GM10248 (cell line): ENCODE measurements at regions of chr13 and their contacts with region 1.

Region 1: DNA sequence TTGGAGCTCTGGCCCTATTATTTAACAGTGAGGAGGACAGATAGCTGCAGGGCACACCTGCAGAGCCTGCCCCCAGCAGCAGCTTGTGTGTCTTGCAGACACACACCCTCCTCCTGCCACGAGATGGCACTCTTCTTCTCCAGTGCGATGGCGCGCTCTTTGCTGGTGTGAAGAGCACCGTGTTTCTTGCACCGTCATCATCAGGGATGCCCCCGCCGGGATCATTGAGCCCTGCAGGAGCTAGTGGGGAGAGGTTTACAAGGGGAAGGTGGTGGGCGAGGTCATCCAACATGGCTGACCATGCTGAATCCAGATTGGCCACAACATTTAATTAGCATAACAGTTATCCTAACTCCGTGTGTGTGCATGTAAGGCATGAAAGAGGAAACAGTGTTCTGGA is 105.6 kb downstream of the RAB20 start:
- DNase-seq: peak; percentile 90
- CTCF ChIP-seq: peak; percentile 97

Region 2: DNA sequence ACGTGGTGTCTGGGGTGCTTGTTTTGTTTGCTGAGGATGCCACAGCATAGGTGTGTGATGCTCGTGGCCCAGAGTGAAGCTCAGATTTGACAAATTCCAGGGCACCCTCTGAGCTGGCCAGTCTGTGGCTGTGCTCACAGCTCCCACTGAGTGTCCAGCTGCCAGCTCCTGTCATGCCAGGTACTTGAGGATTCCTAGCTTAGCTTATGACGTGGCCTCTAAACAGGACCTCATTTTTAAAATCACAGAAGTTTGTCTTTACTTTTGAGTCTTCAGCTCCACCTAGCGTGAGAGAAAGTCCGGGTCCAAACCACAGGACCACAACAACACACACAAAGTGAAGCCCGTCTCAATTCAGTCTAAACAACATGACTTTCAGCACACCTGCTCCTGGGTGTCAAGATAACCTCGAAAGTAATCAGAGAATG is 11.7 kb before region 1 on chr13:
- CTCF ChIA-PET with region 1: interaction called, 39 read pairs
- POLR2A ChIA-PET with region 1: no interaction called
- DNase-seq: peak; percentile 47
- CTCF ChIP-seq: no peak

Region 3: DNA sequence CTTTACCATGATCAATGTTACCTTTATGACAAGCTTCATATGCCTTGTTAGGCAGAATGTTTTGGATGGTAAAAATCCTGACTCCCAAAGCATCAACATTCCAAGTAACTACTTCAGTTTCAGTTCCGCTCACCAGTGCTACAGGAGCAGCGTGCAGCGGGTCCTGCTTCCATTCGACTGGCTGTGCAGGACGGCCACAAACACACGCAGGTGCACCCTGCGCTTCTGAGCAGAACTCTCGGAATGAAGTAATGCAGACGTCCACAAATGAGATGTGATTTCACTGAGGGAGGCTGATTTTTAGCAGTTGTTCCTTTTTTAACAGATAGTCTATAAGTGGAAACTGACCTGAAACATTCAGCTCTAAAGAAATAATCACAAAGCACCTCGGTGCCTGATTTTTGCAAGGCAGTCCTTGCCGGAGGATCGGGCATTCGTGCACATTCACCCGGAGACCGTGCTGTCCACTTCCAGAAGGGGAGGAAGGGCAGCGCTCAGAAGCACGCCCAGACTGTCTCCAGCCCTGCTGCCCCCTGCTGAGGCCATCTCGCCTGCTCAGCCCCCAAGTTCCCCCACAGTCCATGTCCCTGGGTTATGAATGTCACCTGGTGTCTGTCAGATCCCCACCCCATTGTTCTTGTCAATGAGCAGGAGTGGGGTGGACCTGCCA is 19.7 kb after region 1 on chr13:
- CTCF ChIA-PET with region 1: interaction called, 16 read pairs
- POLR2A ChIA-PET with region 1: no interaction called
- DNase-seq: no peak
- CTCF ChIP-seq: no peak

Region 4: GRCh38 chr13:110525328-110526319 is 69.7 kb after region 1 on chr13:
- CTCF ChIA-PET with region 1: interaction called, 13 read pairs
- POLR2A ChIA-PET with region 1: no interaction called
- DNase-seq: peak; percentile 66
- CTCF ChIP-seq: peak; percentile 14

Region 5: GRCh38 chr13:110819203-110820014 is 363.5 kb after region 1 on chr13:
- CTCF ChIA-PET with region 1: interaction called, 16 read pairs
- POLR2A ChIA-PET with region 1: no interaction called
- DNase-seq: peak; percentile 90
- CTCF ChIP-seq: peak; percentile 88